ENCODE measurements at regions of chr3 and their contacts with region 1.

Region 1: GRCh38 chr3:43180027-43180426 is 74.1 kb upstream of the POMGNT2 start:
- DNase-seq: no peak
- H3K4me3 ChIP-seq: no peak overlapping the region
- H3K27ac ChIP-seq: no peak overlapping the region
- H3K4me1 ChIP-seq: peaks cover 0 to 21% of the 10 kb centered on the region in 2 experiments; a peak in 2 of 4 replicates
- H3K27me3 ChIP-seq: no peaks in the 10 kb centered on the region
- CTCF ChIP-seq: no peak
- EP300 ChIP-seq: no peak
- RAD21 ChIP-seq: no peak

Region 2: GRCh38 chr3:42814914-42815507 is 365.0 kb before region 1 on chr3:
- CTCF ChIA-PET with region 1: no interaction called
- POLR2A ChIA-PET with region 1: no interaction called
- DNase-seq: no peak
- H3K4me3 ChIP-seq: no peak overlapping the region
- H3K27ac ChIP-seq: no peak overlapping the region
- H3K4me1 ChIP-seq: peaks cover 0 to 8% of the 10 kb centered on the region in 2 experiments; a peak in 2 of 4 replicates
- H3K27me3 ChIP-seq: no peaks in the 10 kb centered on the region
- CTCF ChIP-seq: no peak
- EP300 ChIP-seq: no peak
- RAD21 ChIP-seq: no peak

Region 3: GRCh38 chr3:43162230-43163084 is 17.6 kb before region 1 on chr3:
- CTCF ChIA-PET with region 1: interaction called, 43 read pairs
- POLR2A ChIA-PET with region 1: no interaction called
- DNase-seq: peak; percentile 47
- H3K4me3 ChIP-seq: no peak overlapping the region; a peak in 1 of 4 replicates
- H3K27ac ChIP-seq: no peak overlapping the region
- H3K4me1 ChIP-seq: peaks cover 0 to 6% of the 10 kb centered on the region in 2 experiments; a peak in 1 of 4 replicates
- H3K27me3 ChIP-seq: peaks cover 6% of the 10 kb centered on the region; the same call in 1 of the 2 replicates
- CTCF ChIP-seq: peak; percentile 46
- EP300 ChIP-seq: no peak
- RAD21 ChIP-seq: peak; percentile 88

Region 4: GRCh38 chr3:43512754-43513404 is 332.9 kb after region 1 on chr3:
- CTCF ChIA-PET with region 1: no interaction called
- POLR2A ChIA-PET with region 1: no interaction called
- DNase-seq: no peak
- H3K4me3 ChIP-seq: no peak overlapping the region
- H3K27ac ChIP-seq: peak overlapping the region in 1 of 2 experiments; percentile 25; a peak in 1 of 4 replicates
- H3K4me1 ChIP-seq: peaks cover 5 to 7% of the 10 kb centered on the region in 2 experiments; a peak in 3 of 4 replicates
- H3K27me3 ChIP-seq: no peaks in the 10 kb centered on the region
- CTCF ChIP-seq: no peak
- EP300 ChIP-seq: no peak
- RAD21 ChIP-seq: no peak